ENCODE measurements at regions of chr1 and their contacts with region 1.

Region 1: GRCh38 chr1:155978325-155978972 is at the start of gene ARHGEF2:
- DNase-seq: peak; percentile 78
- ATAC-seq: peak; percentile 72
- H3K4me3 Mint-ChIP-seq: peak within 1 kb of the TSS; percentile 99
- H3K27ac Mint-ChIP-seq: peak within 1 kb of the TSS; percentile 85
- H3K4me1 Mint-ChIP-seq: peaks cover 61% of the 10 kb centered on the region
- H3K27me3 Mint-ChIP-seq: no peaks in the 10 kb centered on the region
- total RNA-seq, gene ARHGEF2: 151 to 155 TPM

Region 2: DNA sequence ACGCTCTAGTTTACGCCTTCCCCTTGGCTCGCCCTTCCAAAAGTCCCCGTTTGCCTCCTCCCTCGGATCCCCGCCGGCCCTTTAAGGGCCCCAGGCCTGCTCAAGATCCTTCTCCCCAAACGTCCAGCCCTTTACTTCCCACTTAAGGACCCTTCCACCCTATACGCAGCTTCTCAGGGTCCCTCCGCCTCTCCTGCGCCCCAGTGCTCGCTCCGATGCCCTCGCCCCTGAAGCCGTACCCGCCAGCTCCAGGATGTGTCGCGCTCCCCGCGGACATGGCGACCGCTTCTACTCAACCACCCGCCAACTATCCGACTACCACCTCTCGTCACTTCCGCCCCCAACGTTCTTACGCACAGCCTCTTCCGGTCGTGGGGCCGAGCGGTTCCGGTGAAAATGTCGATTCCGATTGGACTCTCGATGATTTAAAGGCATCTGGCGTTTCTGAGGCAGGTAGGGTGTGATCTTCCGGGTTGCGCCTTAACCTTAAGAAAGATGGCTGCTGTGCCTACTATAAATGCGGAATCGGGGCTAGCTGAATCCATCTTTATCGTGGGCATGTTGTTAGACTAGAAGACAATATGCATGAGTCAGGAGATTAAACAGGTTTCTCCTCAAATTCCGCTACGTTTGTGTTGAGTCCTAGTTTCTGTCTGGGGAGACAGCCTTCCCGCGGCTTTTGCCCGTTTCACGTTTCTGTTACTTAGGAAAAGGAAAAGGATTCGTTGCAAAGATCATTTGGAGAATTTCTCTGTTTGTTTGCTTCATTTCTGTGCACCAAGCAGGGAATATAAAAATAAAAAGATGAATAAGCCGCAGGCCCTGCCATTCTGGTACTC is 44.1 kb before region 1 on chr1 and contains the start of gene KHDC4:
- POLR2A ChIA-PET with region 1: interaction called, 105 read pairs
- DNase-seq: peak; percentile 88
- ATAC-seq: peak; percentile 97
- H3K4me3 Mint-ChIP-seq: no peak within 1 kb of the TSS
- H3K27ac Mint-ChIP-seq: no peak within 1 kb of the TSS
- H3K4me1 Mint-ChIP-seq: peaks cover 28% of the 10 kb centered on the region
- H3K27me3 Mint-ChIP-seq: no peaks in the 10 kb centered on the region
- total RNA-seq, gene KHDC4: 91.6 to 94.5 TPM

Region 3: GRCh38 chr1:155940531-155940992 is 37.9 kb before region 1 on chr1:
- POLR2A ChIA-PET with region 1: interaction called, 105 read pairs
- DNase-seq: no peak
- ATAC-seq: peak; percentile 21
- H3K4me3 Mint-ChIP-seq: peak overlapping the region; percentile 45
- H3K27ac Mint-ChIP-seq: peak overlapping the region; percentile 89
- H3K4me1 Mint-ChIP-seq: peaks cover 38% of the 10 kb centered on the region
- H3K27me3 Mint-ChIP-seq: no peaks in the 10 kb centered on the region

Region 4: DNA sequence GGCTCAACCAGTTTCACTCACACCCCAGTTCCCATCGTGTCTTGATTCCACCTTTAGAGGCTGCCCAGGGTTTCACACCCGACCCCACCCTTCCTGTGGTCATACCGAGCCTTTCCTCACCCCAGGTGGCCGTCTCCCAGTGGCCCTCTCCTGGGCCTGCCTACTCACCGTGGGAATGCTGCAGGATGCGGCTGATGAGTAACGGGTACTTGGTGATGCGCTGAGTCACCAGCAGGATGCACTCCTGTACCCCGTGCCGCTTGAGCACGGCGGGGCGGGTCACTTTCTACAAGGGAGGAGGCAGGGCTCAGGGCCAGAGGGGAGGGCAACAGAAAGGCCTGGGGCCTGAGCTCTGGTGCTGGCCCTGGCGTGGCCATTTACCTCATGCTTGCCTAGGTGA is 16.5 kb before region 1 on chr1:
- POLR2A ChIA-PET with region 1: interaction called, 34 read pairs
- DNase-seq: no peak
- ATAC-seq: no peak
- H3K4me3 Mint-ChIP-seq: no peak overlapping the region
- H3K27ac Mint-ChIP-seq: peak overlapping the region; percentile 56
- H3K4me1 Mint-ChIP-seq: peaks cover 20% of the 10 kb centered on the region
- H3K27me3 Mint-ChIP-seq: no peaks in the 10 kb centered on the region

Region 5: DNA sequence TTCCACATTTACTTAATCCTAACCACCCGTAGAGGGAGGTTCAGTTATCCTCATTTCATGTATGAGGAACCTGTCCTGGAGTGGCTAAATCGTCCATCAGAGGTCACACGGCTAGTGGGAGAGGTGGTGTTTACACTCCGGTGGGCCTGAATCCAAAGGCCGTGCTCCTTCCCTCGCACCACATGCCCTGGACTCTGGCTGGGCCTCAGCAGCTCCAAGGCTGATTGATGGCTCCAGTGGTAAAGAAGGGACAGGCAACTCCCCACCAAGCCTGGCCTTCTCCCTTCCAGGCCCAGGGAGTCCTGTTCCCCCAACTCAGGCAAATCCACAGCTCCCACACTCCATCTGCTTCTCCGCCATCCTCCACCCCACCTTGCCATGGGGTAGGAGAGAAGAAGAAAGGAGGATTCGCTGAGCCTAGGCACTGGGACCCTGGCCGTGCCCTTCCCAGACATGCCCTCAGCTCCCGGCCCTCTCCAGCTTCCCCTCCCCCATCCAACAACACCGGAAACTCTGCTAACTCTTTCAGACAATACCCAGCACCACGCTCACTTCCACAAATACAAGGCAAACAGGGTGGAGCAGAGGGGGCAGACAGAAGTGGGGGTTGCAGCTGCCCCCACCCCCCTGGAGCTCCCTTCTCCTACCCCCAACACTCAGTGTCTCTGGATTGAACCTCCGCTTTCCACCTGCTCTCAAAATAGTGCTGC is 11.0 kb before region 1 on chr1:
- POLR2A ChIA-PET with region 1: interaction called, 34 read pairs
- DNase-seq: no peak
- ATAC-seq: peak; percentile 55
- H3K4me3 Mint-ChIP-seq: peak overlapping the region; percentile 79
- H3K27ac Mint-ChIP-seq: peak overlapping the region; percentile 96
- H3K4me1 Mint-ChIP-seq: peaks cover 65% of the 10 kb centered on the region
- H3K27me3 Mint-ChIP-seq: no peaks in the 10 kb centered on the region